Heart left ventricle (tissue), 16 donors: ENCODE measurements at regions of chr10 and their contacts with region 1.

Region 1: GRCh38 chr10:114767101-114767985 is 54.2 kb upstream of the FHIP2A start:
- DNase-seq: peak; percentile 47 to 68 (median 52)
- ATAC-seq: peak in 3 of 4 donors; percentile 77 to 78 (median 77)
- H3K4me3 ChIP-seq: peak overlapping the region; percentile 73 to 97 (median 86)
- H3K27ac ChIP-seq: peak overlapping the region; percentile 79 to 95 (median 92)
- H3K4me1 ChIP-seq: peaks cover 0 to 50% (median 18%) of the 10 kb centered on the region in 12 donors
- H3K27me3 ChIP-seq: peaks cover 0 to 22% (median 0%) of the 10 kb centered on the region in 9 donors
- CTCF ChIP-seq: no peak
- POLR2A ChIP-seq: no peak

Region 2: DNA sequence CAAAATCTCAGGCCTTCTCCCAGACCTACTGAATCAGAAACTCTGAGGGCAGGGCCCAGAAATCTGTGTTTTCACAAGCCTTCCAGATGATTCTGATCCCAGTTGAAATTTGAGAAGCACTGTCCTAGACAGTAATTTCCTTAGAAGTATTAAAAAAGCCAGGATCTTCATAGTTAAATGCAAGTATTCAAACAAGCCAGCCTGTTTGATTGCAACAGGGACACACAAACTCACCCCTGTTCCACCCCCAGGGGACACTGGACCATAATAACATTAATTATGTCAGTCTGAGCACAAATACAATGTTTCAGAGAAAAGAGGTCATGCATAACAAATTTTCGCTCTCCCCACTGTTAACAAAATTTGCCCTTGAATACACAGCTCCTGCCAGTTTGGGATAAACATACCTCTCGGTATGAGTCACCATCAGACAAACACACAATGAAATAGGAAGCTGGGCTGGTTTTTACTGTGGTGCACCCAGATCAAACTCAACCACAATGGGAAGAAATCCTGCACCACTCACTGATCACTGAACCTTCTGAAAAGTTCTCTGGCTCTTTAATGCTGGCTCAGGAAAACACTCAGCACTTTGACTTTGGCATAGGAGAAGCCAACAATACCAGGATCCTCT is 143.6 kb before region 1 on chr10:
- intact Hi-C with region 1: loop called in 1 of 10 experiments (anchors 10 kb)
- DNase-seq: no peak
- ATAC-seq: peak in 3 of 4 donors; percentile 46 to 61 (median 50)
- H3K4me3 ChIP-seq: peak overlapping the region in 2 of 12 donors; percentile 8 to 15
- H3K27ac ChIP-seq: peak overlapping the region; percentile 7 to 91 (median 54)
- H3K4me1 ChIP-seq: peaks cover 14 to 96% (median 59%) of the 10 kb centered on the region in 12 donors
- H3K27me3 ChIP-seq: no peaks in the 10 kb centered on the region
- CTCF ChIP-seq: no peak
- POLR2A ChIP-seq: no peak